Panc1 (cell line): ENCODE measurements at regions of chr18 and their contacts with region 1.

Region 1: DNA sequence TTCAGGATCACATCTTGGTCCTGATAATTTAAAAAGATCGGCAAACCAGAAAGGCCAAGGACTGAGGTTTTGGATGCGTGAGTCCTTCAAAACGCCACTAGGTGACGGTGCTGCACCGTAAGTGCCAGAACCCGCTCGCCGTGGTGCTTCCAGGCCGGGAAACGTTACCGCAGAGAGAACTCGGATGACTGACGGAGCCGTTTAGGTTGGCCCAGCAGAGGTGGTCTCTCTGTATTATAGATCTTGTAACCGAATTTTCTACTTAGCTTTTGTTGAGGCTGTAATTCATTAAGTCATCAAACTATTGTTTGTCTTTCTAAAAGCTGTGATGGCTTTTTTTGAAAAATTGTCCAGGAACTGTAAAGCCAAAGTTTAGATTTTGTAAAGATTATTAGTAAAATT is 39.8 kb upstream of the ADCYAP1 start:
- DNase-seq: peak; percentile 60
- ATAC-seq: peak; percentile 97
- H3K4me3 ChIP-seq: no peak overlapping the region
- H3K27ac ChIP-seq: no peak overlapping the region
- H3K4me1 ChIP-seq: no peaks in the 10 kb centered on the region
- H3K27me3 ChIP-seq: peaks cover 6% of the 10 kb centered on the region
- CTCF ChIP-seq: peak; percentile 100

Region 2: DNA sequence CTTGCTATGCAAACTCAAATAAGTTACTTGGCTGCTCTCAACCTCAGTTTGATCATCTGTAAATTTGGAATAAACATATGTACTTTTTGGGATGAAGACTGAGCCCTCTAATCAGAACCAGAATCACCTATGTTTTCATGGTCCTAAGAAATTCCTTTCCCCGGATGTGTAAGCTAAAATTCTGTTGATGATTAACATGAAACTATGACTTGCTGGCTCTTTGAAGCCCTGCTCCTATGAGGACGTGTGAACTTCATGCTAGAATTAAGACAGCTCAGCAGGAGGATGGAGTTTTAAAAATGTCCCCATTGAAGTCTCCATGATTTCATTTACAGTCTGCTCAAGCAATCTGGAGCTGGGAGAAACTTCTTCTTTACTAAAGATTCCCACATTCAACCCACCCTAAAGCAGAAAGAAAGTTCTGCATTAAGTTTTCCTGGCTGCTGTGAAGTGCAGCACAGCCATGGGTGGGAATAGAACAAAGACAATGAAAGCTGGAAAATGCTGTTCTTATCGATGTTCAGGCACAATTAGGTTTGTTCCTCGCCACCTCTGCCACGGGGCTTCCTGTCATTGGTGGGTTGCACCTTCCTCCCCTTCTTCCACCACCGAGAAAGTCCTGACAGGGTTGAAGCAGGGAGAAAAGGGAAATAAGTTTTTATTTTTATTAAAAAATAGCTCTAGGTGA is 90.7 kb after region 1 on chr18:
- CTCF ChIA-PET with region 1: no interaction called
- POLR2A ChIA-PET with region 1: no interaction called
- in situ Hi-C with region 1: no loop called
- intact Hi-C with region 1: loop called (anchors 5 kb)
- DNase-seq: no peak
- ATAC-seq: no peak
- H3K4me3 ChIP-seq: no peak overlapping the region
- H3K27ac ChIP-seq: no peak overlapping the region
- H3K4me1 ChIP-seq: no peaks in the 10 kb centered on the region
- H3K27me3 ChIP-seq: peaks cover 2% of the 10 kb centered on the region; the same call in 1 of the 2 replicates
- CTCF ChIP-seq: no peak

Region 3: GRCh38 chr18:1585879-1586488 is 721.1 kb after region 1 on chr18:
- CTCF ChIA-PET with region 1: no interaction called
- POLR2A ChIA-PET with region 1: no interaction called
- in situ Hi-C with region 1: no loop called
- intact Hi-C with region 1: loop called (anchors 10 kb)
- DNase-seq: no peak
- ATAC-seq: peak; percentile 58; the same call in 1 of the 2 replicates
- H3K4me3 ChIP-seq: no peak overlapping the region
- H3K27ac ChIP-seq: no peak overlapping the region
- H3K4me1 ChIP-seq: no peaks in the 10 kb centered on the region
- H3K27me3 ChIP-seq: no peaks in the 10 kb centered on the region
- CTCF ChIP-seq: peak; percentile 52; the same call in 1 of the 2 replicates

Region 4: GRCh38 chr18:2293109-2293839 is 1428.4 kb after region 1 on chr18:
- CTCF ChIA-PET with region 1: no interaction called
- POLR2A ChIA-PET with region 1: interaction called, 16 read pairs
- in situ Hi-C with region 1: no loop called
- intact Hi-C with region 1: no loop called
- DNase-seq: no peak
- ATAC-seq: no peak
- H3K4me3 ChIP-seq: no peak overlapping the region
- H3K27ac ChIP-seq: no peak overlapping the region
- H3K4me1 ChIP-seq: no peaks in the 10 kb centered on the region
- H3K27me3 ChIP-seq: no peaks in the 10 kb centered on the region
- CTCF ChIP-seq: no peak